CD8-positive, alpha-beta T cell (primary cell): ENCODE measurements at regions of chr14 and their contacts with region 1.

Region 1: GRCh38 chr14:61252369-61253063 is 28.6 kb downstream of the TMEM30B start:
- DNase-seq: peak; percentile 13 to 76 (median 52)
- ATAC-seq: peak; percentile 85
- H3K4me3 ChIP-seq: no peak overlapping the region
- H3K4me3 Mint-ChIP-seq: no peak overlapping the region
- H3K27ac ChIP-seq: no peak overlapping the region
- H3K27ac Mint-ChIP-seq: no peak overlapping the region
- H3K4me1 ChIP-seq: no peaks in the 10 kb centered on the region
- H3K4me1 Mint-ChIP-seq: peaks cover 3% of the 10 kb centered on the region
- H3K27me3 ChIP-seq: no peaks in the 10 kb centered on the region
- H3K27me3 Mint-ChIP-seq: peaks cover 7% of the 10 kb centered on the region
- CTCF ChIP-seq: peak; percentile 84

Region 2: GRCh38 chr14:60064491-60065072 is 1187.9 kb before region 1 on chr14:
- CTCF ChIA-PET with region 1: no interaction called
- POLR2A ChIA-PET with region 1: no interaction called
- intact Hi-C with region 1: loop called in 1 of 2 experiments (anchors 5 kb)
- DNase-seq: peak in 2 of 9 experiments; percentile 53 to 66
- ATAC-seq: peak; percentile 80
- H3K4me3 ChIP-seq: no peak overlapping the region
- H3K4me3 Mint-ChIP-seq: no peak overlapping the region
- H3K27ac ChIP-seq: no peak overlapping the region
- H3K27ac Mint-ChIP-seq: no peak overlapping the region
- H3K4me1 ChIP-seq: no peaks in the 10 kb centered on the region
- H3K4me1 Mint-ChIP-seq: no peaks in the 10 kb centered on the region
- H3K27me3 ChIP-seq: no peaks in the 10 kb centered on the region
- H3K27me3 Mint-ChIP-seq: peaks cover 2% of the 10 kb centered on the region
- CTCF ChIP-seq: peak; percentile 71

Region 3: DNA sequence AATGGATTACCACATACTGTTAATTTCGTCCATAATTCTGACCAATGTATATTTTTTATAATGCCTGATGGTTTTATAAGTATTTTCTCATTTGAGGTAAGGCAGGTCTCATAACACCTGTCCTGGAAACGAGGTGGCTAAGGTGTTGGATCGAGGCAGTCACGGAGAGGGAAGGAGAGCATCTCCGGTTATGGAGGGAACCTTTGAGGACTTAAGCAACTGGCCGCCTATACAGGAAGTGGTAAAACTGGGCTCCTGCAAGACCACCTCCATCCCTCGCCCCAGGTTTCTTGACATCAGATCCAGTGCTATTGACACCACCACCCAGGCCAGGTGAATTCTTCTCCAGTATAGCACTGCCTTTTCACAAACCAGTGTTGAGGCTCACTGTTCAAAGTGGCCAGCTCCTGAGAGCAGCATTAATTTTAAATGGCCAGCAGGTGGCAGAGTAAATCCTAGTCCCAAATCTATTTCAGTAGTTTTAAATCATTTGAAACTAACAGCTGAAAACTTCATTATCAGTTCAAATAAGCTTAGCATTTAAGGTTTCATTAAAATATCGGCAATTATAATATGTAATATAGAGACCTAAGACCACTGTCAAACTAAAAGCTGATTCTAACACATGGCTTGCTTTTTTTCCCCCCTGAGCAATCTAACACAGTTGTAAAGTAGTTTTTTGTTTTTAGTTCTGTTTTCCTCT is 902.7 kb before region 1 on chr14:
- CTCF ChIA-PET with region 1: interaction called, 30 read pairs
- POLR2A ChIA-PET with region 1: no interaction called
- intact Hi-C with region 1: loop called in 1 of 2 experiments (anchors 1 kb)
- DNase-seq: peak in 4 of 9 experiments; percentile 19 to 56 (median 40)
- ATAC-seq: peak; percentile 57
- H3K4me3 ChIP-seq: no peak overlapping the region
- H3K4me3 Mint-ChIP-seq: no peak overlapping the region
- H3K27ac ChIP-seq: no peak overlapping the region
- H3K27ac Mint-ChIP-seq: no peak overlapping the region
- H3K4me1 ChIP-seq: no peaks in the 10 kb centered on the region
- H3K4me1 Mint-ChIP-seq: peaks cover 4% of the 10 kb centered on the region
- H3K27me3 ChIP-seq: no peaks in the 10 kb centered on the region
- H3K27me3 Mint-ChIP-seq: peaks cover 8% of the 10 kb centered on the region
- CTCF ChIP-seq: peak; percentile 42

Region 4: DNA sequence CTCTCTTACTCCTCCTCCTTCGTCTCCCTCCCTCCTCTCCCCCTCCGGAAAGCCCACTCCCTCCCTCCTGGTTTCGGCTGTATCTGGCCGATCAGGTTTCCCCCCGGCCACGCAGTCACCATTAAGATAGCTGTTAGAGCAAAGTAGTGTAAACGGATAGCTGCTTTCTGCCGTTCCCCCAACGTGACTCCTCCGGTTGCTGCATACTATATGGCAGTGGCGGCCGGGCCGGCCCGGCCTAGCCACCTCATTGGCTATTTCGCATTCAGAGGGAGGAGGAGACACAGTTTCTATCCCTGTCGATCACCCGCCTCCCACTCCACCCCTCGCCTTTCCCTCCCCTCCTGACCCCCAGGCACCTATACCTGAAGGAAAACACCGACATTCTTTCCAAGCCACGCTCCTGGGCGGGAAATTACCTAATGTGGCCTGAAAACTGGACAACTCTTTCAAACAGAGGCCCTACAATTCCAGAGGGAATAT is 528.3 kb before region 1 on chr14 and contains the start of gene SIX4:
- CTCF ChIA-PET with region 1: no interaction called
- POLR2A ChIA-PET with region 1: no interaction called
- intact Hi-C with region 1: loop called in 1 of 2 experiments (anchors 10 kb)
- DNase-seq: peak in 3 of 9 experiments; percentile 10 to 37 (median 18)
- ATAC-seq: no peak
- H3K4me3 ChIP-seq: peak within 1 kb of the TSS; percentile 53 to 75
- H3K4me3 Mint-ChIP-seq: peak within 1 kb of the TSS; percentile 89
- H3K27ac ChIP-seq: no peak within 1 kb of the TSS
- H3K27ac Mint-ChIP-seq: no peak within 1 kb of the TSS
- H3K4me1 ChIP-seq: peaks cover 14% of the 10 kb centered on the region
- H3K4me1 Mint-ChIP-seq: peaks cover 21% of the 10 kb centered on the region
- H3K27me3 ChIP-seq: peaks cover 39 to 49% of the 10 kb centered on the region in 2 experiments
- H3K27me3 Mint-ChIP-seq: peaks cover 74% of the 10 kb centered on the region
- CTCF ChIP-seq: no peak
- total RNA-seq, gene SIX4: not detected

Region 5: DNA sequence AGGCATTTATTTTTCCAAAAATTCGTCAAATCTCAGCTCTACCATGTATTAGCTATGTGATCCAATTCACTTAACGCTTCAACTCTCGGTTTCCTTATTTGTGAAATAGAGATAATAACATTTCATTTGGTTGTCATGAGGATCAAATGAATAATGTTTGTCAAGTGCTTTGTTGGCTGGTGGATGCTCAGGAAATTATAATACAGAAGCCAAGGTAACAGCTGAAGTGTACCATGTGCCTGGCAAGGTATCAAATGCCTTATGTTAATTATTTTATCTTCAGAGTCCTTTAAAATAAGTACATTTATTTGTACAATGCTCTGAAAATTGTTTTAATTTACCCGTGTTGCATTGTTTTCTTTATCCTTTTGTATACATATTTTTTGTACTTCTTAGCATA is 62.8 kb after region 1 on chr14:
- CTCF ChIA-PET with region 1: no interaction called
- POLR2A ChIA-PET with region 1: no interaction called
- intact Hi-C with region 1: no loop called
- DNase-seq: no peak
- ATAC-seq: no peak
- H3K4me3 ChIP-seq: no peak overlapping the region
- H3K4me3 Mint-ChIP-seq: no peak overlapping the region
- H3K27ac ChIP-seq: no peak overlapping the region
- H3K27ac Mint-ChIP-seq: no peak overlapping the region
- H3K4me1 ChIP-seq: no peaks in the 10 kb centered on the region
- H3K4me1 Mint-ChIP-seq: peaks cover 2% of the 10 kb centered on the region
- H3K27me3 ChIP-seq: no peaks in the 10 kb centered on the region
- H3K27me3 Mint-ChIP-seq: no peaks in the 10 kb centered on the region
- CTCF ChIP-seq: no peak